ENCODE measurements at regions of chr2 and their contacts with region 1.

Region 1: DNA sequence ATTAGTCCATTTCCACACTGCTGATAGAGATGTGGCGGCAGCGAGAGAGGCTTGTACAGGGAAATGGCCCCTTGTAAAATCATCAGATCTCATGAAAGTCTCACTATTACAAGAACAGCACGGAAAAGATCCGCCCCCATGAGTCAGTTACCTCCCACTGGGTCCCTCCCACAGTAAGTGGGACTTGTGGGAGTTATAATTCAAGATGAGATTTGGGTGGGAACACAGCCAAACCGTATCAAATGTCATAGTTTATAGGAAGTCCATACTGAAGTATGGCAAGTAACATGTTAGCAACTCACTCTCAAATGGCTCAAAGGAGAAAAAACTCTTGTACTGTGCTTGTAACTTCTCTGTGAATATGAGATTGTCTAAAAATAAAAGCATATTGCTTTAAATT is 56.1 kb downstream of the FARP2 start:
- DNase-seq: peak; percentile 97
- ATAC-seq: peak; percentile 94
- H3K4me3 ChIP-seq: no peak overlapping the region
- H3K27ac ChIP-seq: peak overlapping the region; percentile 47; the same call in 1 of the 2 replicates
- H3K4me1 ChIP-seq: peaks cover 11% of the 10 kb centered on the region
- H3K27me3 ChIP-seq: no peaks in the 10 kb centered on the region
- CTCF ChIP-seq: no peak
- POLR2A ChIP-seq: no peak; the same call in 1 of the 2 replicates
- RAD21 ChIP-seq: no peak

Region 2: DNA sequence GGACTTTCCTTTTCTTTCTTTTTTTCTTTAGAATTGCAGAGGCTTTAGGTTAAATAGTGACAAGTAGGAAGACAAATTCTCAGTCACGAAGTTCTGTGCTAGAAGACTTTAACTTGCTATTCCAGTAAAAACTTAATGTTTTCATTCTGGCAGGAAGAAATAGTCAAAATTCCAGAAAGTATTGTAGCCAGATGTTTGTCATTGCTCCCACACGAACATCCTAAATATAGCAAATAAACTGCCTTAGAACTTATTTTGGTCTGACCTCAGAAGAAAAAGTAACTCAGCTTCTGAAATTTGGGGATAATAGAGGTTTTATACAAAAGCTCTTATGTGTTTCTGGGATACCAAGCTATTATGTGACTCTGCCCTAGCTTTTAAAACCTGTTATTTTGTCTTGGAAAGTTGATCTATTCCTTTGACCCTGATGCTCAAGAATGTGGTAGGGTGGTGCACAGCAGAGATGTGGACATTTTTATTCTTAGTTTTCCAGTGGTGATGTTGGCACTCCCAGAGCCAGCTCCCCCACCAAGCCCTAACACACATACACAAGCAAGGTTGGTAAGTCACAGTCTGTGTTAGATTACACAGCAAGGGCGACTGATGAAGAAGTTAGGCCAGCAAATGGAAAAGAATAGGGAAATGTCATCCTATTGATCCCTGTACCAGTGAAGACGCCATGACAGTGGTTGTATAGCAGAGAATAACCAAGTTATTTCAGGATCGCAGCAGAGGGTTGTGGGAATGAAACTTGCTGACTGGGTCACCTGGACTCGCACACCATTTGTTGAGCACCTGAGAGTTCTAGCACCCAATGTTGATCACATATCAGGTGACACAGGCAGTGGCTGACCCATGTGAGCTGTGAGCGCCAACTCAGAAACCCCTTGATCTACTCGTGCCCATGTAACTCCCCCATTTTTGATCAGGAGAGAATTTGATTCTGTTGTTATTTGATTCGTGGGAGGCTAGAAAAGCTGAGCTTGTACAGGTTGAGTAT is 32.4 kb before region 1 on chr2:
- CTCF ChIA-PET with region 1: no interaction called
- POLR2A ChIA-PET with region 1: no interaction called
- dilution Hi-C with region 1: no loop called
- in situ Hi-C with region 1: no loop called
- intact Hi-C with region 1: loop called (anchors 5 kb)
- DNase-seq: peak; percentile 51
- ATAC-seq: peak; percentile 52
- H3K4me3 ChIP-seq: no peak overlapping the region
- H3K27ac ChIP-seq: peak overlapping the region; percentile 2; the same call in 1 of the 2 replicates
- H3K4me1 ChIP-seq: peaks cover 17% of the 10 kb centered on the region
- H3K27me3 ChIP-seq: no peaks in the 10 kb centered on the region
- CTCF ChIP-seq: no peak
- POLR2A ChIP-seq: no peak
- RAD21 ChIP-seq: no peak

Region 3: DNA sequence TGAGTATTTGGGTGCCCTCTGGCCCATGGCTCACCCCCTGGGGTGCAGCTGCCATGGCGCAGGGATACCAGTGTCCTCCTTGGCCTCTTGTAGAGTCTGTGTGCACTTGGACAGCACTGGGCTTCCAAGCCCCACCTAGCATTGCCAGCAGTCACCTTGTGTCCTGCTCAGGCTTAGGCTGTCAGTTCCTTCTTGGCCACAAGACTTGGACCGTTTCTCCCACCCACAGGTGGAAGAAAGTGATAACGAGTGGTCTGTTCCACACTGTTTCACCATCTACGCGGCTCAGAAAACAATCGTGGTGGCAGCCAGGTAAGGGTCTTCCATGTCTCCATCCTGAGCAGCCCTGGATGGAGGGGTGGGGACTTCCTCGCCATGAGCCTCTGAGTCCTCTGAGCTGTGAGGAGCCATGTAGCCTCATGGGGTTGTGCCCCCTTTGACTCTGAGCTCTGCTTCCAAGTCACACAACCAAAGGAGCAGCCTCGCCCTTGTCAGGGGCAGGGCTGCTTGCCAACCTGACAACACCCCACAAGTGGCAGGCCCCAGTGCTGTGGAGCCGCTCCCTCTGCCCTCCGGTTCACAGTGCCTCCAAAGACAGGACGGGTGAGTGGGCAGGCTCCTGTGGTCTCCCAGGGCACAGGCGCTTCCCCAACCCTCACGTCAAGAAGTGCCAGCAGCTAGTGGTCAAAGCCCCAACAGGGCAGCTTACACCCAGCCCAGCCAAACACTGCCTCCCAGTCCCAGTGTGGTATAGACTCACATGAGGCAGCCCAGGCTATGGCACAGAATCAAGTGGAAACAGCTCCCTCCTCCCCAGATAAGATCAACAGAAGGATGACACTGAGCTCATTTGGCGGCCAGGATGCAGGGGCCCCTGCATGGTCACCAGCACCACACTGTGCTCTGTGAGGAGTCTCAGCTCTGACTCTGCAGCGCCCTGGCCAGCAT is 77.9 kb after region 1 on chr2:
- CTCF ChIA-PET with region 1: no interaction called
- POLR2A ChIA-PET with region 1: no interaction called
- dilution Hi-C with region 1: no loop called
- in situ Hi-C with region 1: no loop called
- intact Hi-C with region 1: no loop called
- DNase-seq: peak; percentile 16
- ATAC-seq: peak; percentile 30
- H3K4me3 ChIP-seq: no peak overlapping the region
- H3K27ac ChIP-seq: no peak overlapping the region
- H3K4me1 ChIP-seq: 0 out of 2 replicates have a peak, but pooled peaks cover 2% of the 10 kb centered on the region
- H3K27me3 ChIP-seq: no peaks in the 10 kb centered on the region
- CTCF ChIP-seq: no peak
- POLR2A ChIP-seq: no peak
- RAD21 ChIP-seq: no peak

Region 4: GRCh38 chr2:241666627-241667400 is 254.7 kb after region 1 on chr2:
- CTCF ChIA-PET with region 1: no interaction called
- POLR2A ChIA-PET with region 1: no interaction called
- dilution Hi-C with region 1: no loop called
- in situ Hi-C with region 1: no loop called
- intact Hi-C with region 1: no loop called
- DNase-seq: peak; percentile 23
- ATAC-seq: no peak
- H3K4me3 ChIP-seq: no peak overlapping the region
- H3K27ac ChIP-seq: no peak overlapping the region
- H3K4me1 ChIP-seq: peaks cover 15% of the 10 kb centered on the region
- H3K27me3 ChIP-seq: no peaks in the 10 kb centered on the region
- CTCF ChIP-seq: no peak
- POLR2A ChIP-seq: no peak
- RAD21 ChIP-seq: no peak

Region 5: GRCh38 chr2:241702132-241703031 is 290.2 kb after region 1 on chr2:
- CTCF ChIA-PET with region 1: interaction called, 12 read pairs
- POLR2A ChIA-PET with region 1: no interaction called
- dilution Hi-C with region 1: no loop called
- in situ Hi-C with region 1: no loop called
- intact Hi-C with region 1: no loop called
- DNase-seq: peak; percentile 75
- ATAC-seq: peak; percentile 89
- H3K4me3 ChIP-seq: peak overlapping the region; percentile 80
- H3K27ac ChIP-seq: peak overlapping the region; percentile 46; the same call in 1 of the 2 replicates
- H3K4me1 ChIP-seq: peaks cover 4% of the 10 kb centered on the region; the same call in 1 of the 2 replicates
- H3K27me3 ChIP-seq: no peaks in the 10 kb centered on the region
- CTCF ChIP-seq: no peak; the same call in 1 of the 2 replicates
- POLR2A ChIP-seq: no peak
- RAD21 ChIP-seq: no peak

Region 6: GRCh38 chr2:241965931-241966412 is 553.8 kb after region 1 on chr2:
- CTCF ChIA-PET with region 1: no interaction called
- POLR2A ChIA-PET with region 1: no interaction called
- dilution Hi-C with region 1: no loop called
- in situ Hi-C with region 1: no loop called
- intact Hi-C with region 1: no loop called
- DNase-seq: peak; percentile 95
- ATAC-seq: peak; percentile 96
- H3K4me3 ChIP-seq: peak overlapping the region; percentile 6; the same call in 1 of the 2 replicates
- H3K27ac ChIP-seq: 0 out of 2 replicates have a peak overlapping the region, but pooled peaks have one; percentile 2
- H3K4me1 ChIP-seq: peaks cover 7% of the 10 kb centered on the region
- H3K27me3 ChIP-seq: peaks cover 15% of the 10 kb centered on the region
- CTCF ChIP-seq: no peak
- POLR2A ChIP-seq: no peak
- RAD21 ChIP-seq: peak; percentile 3; the same call in 1 of the 2 replicates

Measured in IMR-90 (cell line).